Left lung (tissue), 14 donors: ENCODE measurements at regions of chr3 and their contacts with region 1.

Region 1: DNA sequence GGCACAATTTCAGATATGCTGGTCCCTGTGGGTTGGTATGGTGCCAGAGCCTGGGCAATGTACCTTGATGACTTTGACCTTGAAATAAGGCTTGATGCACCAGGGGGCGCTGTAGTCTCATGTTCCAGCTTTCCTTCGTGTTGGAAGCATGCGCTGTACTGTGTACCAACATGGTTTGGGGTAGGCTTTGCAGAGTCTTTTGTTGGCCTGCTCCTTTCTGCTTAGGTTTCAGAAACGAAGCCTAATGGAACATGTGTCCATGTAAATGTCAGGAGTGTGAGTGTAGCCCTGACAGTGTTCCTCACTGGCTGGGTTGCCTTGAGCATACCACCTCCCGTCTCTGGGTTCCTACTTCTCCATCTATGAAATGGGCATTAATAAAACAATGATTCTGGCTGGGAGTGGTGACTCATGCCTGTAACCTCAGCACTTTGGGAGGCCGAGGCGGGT is 3.6 kb upstream of the CCR4 start:
- DNase-seq: peak in 3 of 4 donors; percentile 64 to 84 (median 81)
- ATAC-seq: peak; percentile 96
- H3K4me3 ChIP-seq: no peak overlapping the region
- H3K27ac ChIP-seq: no peak overlapping the region
- H3K4me1 ChIP-seq: peaks cover 3 to 6% of the 10 kb centered on the region in 2 donors
- H3K27me3 ChIP-seq: no peaks in the 10 kb centered on the region
- CTCF ChIP-seq: peak; percentile 58 to 68

Region 2: GRCh38 chr3:33074217-33075067 is 126.6 kb after region 1 on chr3:
- intact Hi-C with region 1: loop called in 1 of 2 experiments (anchors 2 kb)
- DNase-seq: peak in 3 of 4 donors; percentile 43 to 72 (median 48)
- ATAC-seq: peak; percentile 95
- H3K4me3 ChIP-seq: no peak overlapping the region
- H3K27ac ChIP-seq: no peak overlapping the region
- H3K4me1 ChIP-seq: peaks cover 0 to 15% of the 10 kb centered on the region in 2 donors
- H3K27me3 ChIP-seq: no peaks in the 10 kb centered on the region
- CTCF ChIP-seq: peak; percentile 79 to 90

Region 3: DNA sequence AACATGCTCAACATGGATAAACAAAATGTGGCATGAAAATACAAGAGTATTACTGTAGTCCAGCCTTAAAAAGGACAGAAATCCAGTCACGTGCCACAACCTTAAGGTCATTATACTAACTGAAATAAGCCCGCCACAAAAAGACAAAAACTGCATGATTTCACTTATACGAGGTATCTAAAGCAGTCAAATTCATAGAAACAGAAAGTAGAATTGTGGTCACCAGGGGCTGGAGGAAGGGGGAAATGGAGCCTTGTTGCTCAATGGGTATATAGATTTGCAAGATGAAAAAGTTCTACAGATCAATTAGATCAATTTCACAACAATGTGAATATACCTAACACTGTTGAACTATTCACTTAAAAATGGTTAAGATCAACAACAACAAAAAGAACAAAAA is 141.7 kb after region 1 on chr3:
- intact Hi-C with region 1: no loop called
- DNase-seq: no peak
- ATAC-seq: no peak
- H3K4me3 ChIP-seq: no peak overlapping the region
- H3K27ac ChIP-seq: no peak overlapping the region
- H3K4me1 ChIP-seq: peaks cover 0 to 28% of the 10 kb centered on the region in 2 donors
- H3K27me3 ChIP-seq: no peaks in the 10 kb centered on the region
- CTCF ChIP-seq: no peak